ENCODE measurements at regions of chr5 and their contacts with region 1.

Region 1: GRCh38 chr5:160439205-160439600 is 17.5 kb downstream of the PTTG1 start:
- DNase-seq: peak; percentile 88
- H3K4me3 Mint-ChIP-seq: peak overlapping the region; percentile 80
- H3K27ac Mint-ChIP-seq: peak overlapping the region; percentile 72
- H3K4me1 Mint-ChIP-seq: peaks cover 27% of the 10 kb centered on the region
- H3K27me3 Mint-ChIP-seq: peaks cover 18% of the 10 kb centered on the region

Region 2: DNA sequence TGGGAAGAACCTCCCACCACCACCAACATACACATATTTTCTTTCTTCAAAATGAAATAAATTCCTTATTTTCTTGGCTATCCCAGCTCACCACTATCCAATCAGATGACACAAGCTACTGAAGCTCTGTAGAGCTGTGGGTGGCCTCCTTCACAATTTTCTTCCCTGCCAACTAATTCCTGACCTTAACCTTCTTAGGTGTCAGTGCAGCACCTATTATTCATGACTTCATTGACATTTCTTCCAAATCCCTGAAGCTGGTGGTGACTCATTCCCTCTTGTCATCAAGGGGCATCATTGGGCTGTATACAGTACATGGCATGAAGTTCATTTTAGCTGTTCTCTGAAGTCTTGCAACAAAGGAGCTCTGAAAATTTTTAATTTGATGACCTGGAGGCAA is 564.9 kb before region 1 on chr5:
- CTCF ChIA-PET with region 1: no interaction called
- DNase-seq: no peak
- H3K4me3 Mint-ChIP-seq: no peak overlapping the region
- H3K27ac Mint-ChIP-seq: no peak overlapping the region
- H3K4me1 Mint-ChIP-seq: no peaks in the 10 kb centered on the region
- H3K27me3 Mint-ChIP-seq: peaks cover 11% of the 10 kb centered on the region

Region 3: GRCh38 chr5:160092960-160093707 is 346.1 kb before region 1 on chr5:
- CTCF ChIA-PET with region 1: no interaction called
- DNase-seq: no peak
- H3K4me3 Mint-ChIP-seq: no peak overlapping the region
- H3K27ac Mint-ChIP-seq: no peak overlapping the region
- H3K4me1 Mint-ChIP-seq: peaks cover 22% of the 10 kb centered on the region
- H3K27me3 Mint-ChIP-seq: no peaks in the 10 kb centered on the region

Region 4: DNA sequence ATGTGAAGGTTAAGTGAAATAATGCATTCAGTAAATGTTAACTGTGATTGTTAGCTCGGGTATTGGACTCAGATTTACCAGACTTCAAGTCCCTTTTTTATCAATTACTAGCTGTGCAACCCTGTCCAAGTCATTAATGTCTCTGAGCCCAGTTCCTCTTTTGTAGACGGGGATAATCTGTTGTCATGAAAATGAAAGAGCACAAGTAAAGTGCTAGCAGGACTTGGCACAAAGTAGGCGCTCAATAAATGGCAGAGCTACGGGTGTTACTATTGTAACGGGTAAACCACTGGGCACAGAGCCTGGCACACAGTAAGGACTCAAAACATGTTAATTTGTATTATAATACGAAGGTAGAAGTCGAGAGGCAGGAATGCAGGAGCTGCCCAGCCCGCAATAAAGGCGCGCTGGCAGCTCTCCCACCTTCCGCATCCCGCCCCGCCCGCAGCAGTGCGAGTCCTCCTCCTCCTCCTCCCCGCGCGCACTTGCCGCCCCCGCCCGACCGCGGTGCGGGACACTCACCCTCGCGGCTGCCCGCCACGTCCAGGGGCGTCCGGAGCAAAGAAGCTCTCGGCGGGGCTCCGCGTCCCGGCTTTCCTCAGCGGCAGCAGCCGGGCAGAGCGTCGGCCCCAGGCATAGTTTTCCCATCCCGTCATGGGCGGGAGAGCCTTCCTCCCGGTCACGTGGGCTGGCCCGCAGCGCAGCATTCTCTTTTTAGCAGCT is 69.1 kb before region 1 on chr5 and contains the start of gene C1QTNF2:
- CTCF ChIA-PET with region 1: no interaction called
- DNase-seq: peak; percentile 32
- H3K4me3 Mint-ChIP-seq: peak within 1 kb of the TSS; percentile 37
- H3K27ac Mint-ChIP-seq: no peak within 1 kb of the TSS
- H3K4me1 Mint-ChIP-seq: peaks cover 12% of the 10 kb centered on the region
- H3K27me3 Mint-ChIP-seq: peaks cover 83% of the 10 kb centered on the region

Region 5: GRCh38 chr5:160418561-160419457 is 20.4 kb before region 1 on chr5 and contains the start of gene SLU7:
- CTCF ChIA-PET with region 1: interaction called, 54 read pairs
- DNase-seq: peak; percentile 95
- H3K4me3 Mint-ChIP-seq: peak within 1 kb of the TSS; percentile 92
- H3K27ac Mint-ChIP-seq: peak within 1 kb of the TSS; percentile 97
- H3K4me1 Mint-ChIP-seq: peaks cover 68% of the 10 kb centered on the region
- H3K27me3 Mint-ChIP-seq: no peaks in the 10 kb centered on the region

Region 6: GRCh38 chr5:160467555-160468362 is 28.6 kb after region 1 on chr5:
- CTCF ChIA-PET with region 1: interaction called, 117 read pairs
- DNase-seq: peak; percentile 84
- H3K4me3 Mint-ChIP-seq: peak overlapping the region; percentile 97
- H3K27ac Mint-ChIP-seq: peak overlapping the region; percentile 96
- H3K4me1 Mint-ChIP-seq: peaks cover 78% of the 10 kb centered on the region
- H3K27me3 Mint-ChIP-seq: peaks cover 3% of the 10 kb centered on the region

Region 7: DNA sequence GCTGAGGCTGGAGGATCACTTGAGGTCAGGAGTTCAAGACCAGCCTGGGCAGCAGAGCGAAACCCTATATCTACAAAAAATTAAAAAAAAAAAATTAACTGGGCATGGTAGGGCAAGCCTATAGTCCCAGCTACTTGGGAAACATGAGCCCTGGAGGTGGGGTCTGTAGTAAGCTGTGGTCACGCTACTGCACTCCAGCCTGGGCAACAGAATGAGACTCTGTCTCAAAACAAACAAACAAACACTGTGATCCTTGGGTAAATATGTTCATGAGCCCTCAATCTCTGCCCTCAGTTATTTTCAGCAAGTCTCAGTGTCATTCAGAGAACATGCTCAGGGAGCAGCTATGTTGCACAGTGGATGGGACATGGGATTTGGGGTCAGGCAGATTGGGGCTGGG is 58.7 kb after region 1 on chr5:
- CTCF ChIA-PET with region 1: interaction called, 11 read pairs
- DNase-seq: no peak
- H3K4me3 Mint-ChIP-seq: no peak overlapping the region
- H3K27ac Mint-ChIP-seq: no peak overlapping the region
- H3K4me1 Mint-ChIP-seq: no peaks in the 10 kb centered on the region
- H3K27me3 Mint-ChIP-seq: peaks cover 13% of the 10 kb centered on the region

Region 8: GRCh38 chr5:160649304-160649703 is 210.1 kb after region 1 on chr5:
- CTCF ChIA-PET with region 1: interaction called, 12 read pairs
- DNase-seq: no peak
- H3K4me3 Mint-ChIP-seq: no peak overlapping the region
- H3K27ac Mint-ChIP-seq: no peak overlapping the region
- H3K4me1 Mint-ChIP-seq: no peaks in the 10 kb centered on the region
- H3K27me3 Mint-ChIP-seq: no peaks in the 10 kb centered on the region

Measured in activated naive CD4-positive, alpha-beta T cell treated with anti-CD3 and anti-CD28 coated beads, Interleukin-2, amount 10 ng/mL, durations not matched to agents 7 days and 5 days (primary cell).